Activated B cell treated with CpG ODN at 0.5 μM for 24 hours (primary cell): ENCODE measurements at regions of chr7 and their contacts with region 1.

Region 1: GRCh38 chr7:19665399-19666008 is 43.3 kb downstream of the POLR1F start:
- DNase-seq: no peak
- ATAC-seq: peak; percentile 32
- H3K4me3 Mint-ChIP-seq: no peak overlapping the region
- H3K27ac Mint-ChIP-seq: no peak overlapping the region
- H3K4me1 Mint-ChIP-seq: peaks cover 20% of the 10 kb centered on the region
- H3K27me3 Mint-ChIP-seq: no peaks in the 10 kb centered on the region
- CTCF ChIP-seq: no peak

Region 2: DNA sequence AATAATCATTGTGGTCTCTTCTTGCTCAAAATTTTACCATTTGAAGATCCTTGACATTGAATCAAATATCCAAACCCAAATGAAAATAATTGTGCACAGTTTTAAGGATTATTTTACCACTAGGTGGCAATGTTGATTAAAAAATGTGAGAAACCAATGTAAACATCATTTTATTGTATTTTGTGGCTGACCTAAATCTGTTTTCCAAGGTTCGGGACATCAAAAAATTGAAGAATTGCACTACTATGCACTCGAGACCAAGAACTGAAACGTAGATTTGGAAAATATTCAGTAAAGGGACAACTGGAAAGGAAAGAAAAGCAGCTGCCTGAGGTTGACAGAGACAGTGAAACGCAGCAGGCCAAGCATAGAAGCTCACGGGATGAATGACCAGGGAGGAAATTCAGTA is 1984.6 kb before region 1 on chr7:
- CTCF ChIA-PET with region 1: interaction called, 4 read pairs
- POLR2A ChIA-PET with region 1: no interaction called
- intact Hi-C with region 1: loop called (anchors 1 kb)
- DNase-seq: no peak
- ATAC-seq: no peak
- H3K4me3 Mint-ChIP-seq: no peak overlapping the region
- H3K27ac Mint-ChIP-seq: no peak overlapping the region
- H3K4me1 Mint-ChIP-seq: no peaks in the 10 kb centered on the region
- H3K27me3 Mint-ChIP-seq: no peaks in the 10 kb centered on the region
- CTCF ChIP-seq: no peak

Region 3: DNA sequence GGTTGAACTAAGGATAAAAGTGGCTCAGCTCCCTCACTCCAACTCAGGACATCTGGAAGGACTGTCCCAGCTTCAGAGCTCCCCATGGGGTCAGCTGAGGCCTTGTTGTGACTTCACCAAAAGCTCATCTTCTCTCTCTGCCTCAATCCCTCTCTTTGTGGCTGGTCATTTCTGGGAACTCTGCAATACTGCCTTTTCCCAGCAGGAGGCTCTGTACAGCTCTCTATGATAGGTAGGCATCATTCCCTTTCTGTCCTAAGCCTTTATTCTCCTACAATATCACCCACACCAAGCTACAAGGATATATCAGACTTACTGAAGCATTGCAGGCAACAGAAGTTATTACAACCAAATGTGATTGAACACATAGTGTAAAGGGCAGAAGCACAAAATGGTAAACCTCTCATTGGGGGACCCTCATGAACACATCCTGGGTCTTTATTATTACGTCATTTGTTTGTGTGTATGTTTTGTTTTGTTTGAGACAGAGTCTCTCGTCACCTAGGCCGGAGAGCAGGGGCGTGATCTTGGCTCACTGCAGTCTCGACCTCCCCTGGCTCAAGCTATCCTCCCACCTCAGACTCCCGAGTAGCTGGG is 1601.2 kb before region 1 on chr7:
- CTCF ChIA-PET with region 1: no interaction called
- POLR2A ChIA-PET with region 1: no interaction called
- intact Hi-C with region 1: loop called (anchors 1 kb)
- DNase-seq: no peak
- ATAC-seq: no peak
- H3K4me3 Mint-ChIP-seq: no peak overlapping the region
- H3K27ac Mint-ChIP-seq: no peak overlapping the region
- H3K4me1 Mint-ChIP-seq: no peaks in the 10 kb centered on the region
- H3K27me3 Mint-ChIP-seq: no peaks in the 10 kb centered on the region
- CTCF ChIP-seq: no peak

Region 4: DNA sequence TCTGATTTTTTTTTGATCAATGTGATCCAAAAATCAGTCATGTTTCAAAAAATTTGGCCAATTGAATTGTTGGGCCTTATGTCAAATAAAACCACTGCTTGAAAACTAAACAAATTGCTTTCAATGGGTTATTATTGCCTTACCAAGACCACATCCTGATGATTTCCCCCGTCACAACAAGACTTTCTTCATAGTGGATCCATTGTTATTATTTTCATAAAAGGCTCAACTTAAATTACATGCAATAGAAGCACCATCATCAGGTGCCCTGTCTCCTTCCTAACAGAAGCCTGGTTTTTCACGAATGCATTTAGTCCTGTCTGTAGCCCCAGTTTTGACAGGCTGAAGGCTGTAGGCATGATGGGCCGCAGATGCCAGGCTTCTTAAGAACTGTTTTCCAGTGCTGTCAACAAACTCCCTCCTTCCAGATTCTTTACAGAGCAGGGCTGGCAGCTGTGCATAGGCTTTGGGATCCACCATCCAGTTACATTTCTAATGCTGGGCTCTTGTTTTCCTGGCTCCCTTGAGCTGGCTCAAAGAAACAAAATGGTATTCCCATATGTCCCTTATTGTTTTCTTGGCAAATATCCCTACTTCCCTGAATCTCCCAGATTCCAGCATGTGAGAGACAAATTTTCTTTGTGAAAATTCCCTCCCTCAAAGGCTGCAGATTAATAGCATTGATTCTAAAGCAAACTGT is 850.1 kb before region 1 on chr7:
- CTCF ChIA-PET with region 1: no interaction called
- POLR2A ChIA-PET with region 1: no interaction called
- intact Hi-C with region 1: no loop called
- DNase-seq: no peak
- ATAC-seq: no peak
- H3K4me3 Mint-ChIP-seq: no peak overlapping the region
- H3K27ac Mint-ChIP-seq: no peak overlapping the region
- H3K4me1 Mint-ChIP-seq: no peaks in the 10 kb centered on the region
- H3K27me3 Mint-ChIP-seq: no peaks in the 10 kb centered on the region
- CTCF ChIP-seq: no peak

Region 5: DNA sequence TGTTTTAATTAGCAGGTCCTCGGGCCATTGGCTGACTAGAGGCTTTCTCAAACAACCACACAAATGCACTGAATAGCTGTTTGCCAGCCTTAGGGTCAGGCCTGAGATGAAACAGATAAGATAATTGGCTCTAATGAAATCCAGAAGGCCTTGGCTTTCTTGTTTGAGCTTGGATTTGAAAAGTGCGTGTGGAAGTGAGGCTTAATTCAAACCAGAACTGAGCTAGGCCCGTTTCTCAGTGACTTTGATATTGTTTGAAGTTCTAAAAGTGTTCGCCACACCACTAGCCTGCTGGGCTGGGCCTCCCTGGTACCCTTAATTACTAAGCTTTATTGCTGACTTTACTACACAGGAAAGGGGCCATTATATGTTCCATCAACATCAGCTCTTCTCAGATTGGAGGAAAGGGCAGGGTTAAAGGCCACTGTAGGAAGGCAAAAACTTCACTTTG is 818.7 kb before region 1 on chr7:
- CTCF ChIA-PET with region 1: no interaction called
- POLR2A ChIA-PET with region 1: no interaction called
- intact Hi-C with region 1: no loop called
- DNase-seq: no peak
- ATAC-seq: no peak
- H3K4me3 Mint-ChIP-seq: no peak overlapping the region
- H3K27ac Mint-ChIP-seq: no peak overlapping the region
- H3K4me1 Mint-ChIP-seq: peaks cover 4% of the 10 kb centered on the region
- H3K27me3 Mint-ChIP-seq: no peaks in the 10 kb centered on the region
- CTCF ChIP-seq: no peak

Region 6: GRCh38 chr7:19117091-19117869 is 548.2 kb before region 1 on chr7 and contains the start of gene TWIST1:
- CTCF ChIA-PET with region 1: no interaction called
- POLR2A ChIA-PET with region 1: no interaction called
- intact Hi-C with region 1: loop called (anchors 10 kb)
- DNase-seq: no peak
- ATAC-seq: peak; percentile 18
- H3K4me3 Mint-ChIP-seq: peak within 1 kb of the TSS; percentile 66
- H3K27ac Mint-ChIP-seq: no peak within 1 kb of the TSS
- H3K4me1 Mint-ChIP-seq: peaks cover 15% of the 10 kb centered on the region
- H3K27me3 Mint-ChIP-seq: peaks cover 50% of the 10 kb centered on the region
- CTCF ChIP-seq: no peak
- total RNA-seq, gene TWIST1: not detected in 2 replicates

Region 7: DNA sequence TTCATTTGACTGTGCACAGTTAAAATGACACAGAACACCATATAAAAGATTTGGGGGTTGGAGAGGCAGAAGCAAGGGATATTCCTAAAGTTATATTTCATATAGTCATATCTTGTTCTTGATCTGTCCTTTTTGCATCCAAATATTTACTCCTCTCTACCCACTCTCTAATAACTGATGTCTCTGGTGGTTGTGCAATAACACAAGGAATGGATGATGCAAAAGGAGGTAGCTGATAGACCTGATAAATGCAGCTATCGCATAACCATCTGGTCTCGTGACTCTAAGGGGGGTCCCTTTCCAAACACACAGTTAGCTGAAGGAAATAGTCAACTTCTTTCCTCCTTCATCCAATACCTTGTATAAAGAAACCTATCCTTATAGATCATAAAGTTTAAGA is 79.7 kb before region 1 on chr7:
- CTCF ChIA-PET with region 1: no interaction called
- POLR2A ChIA-PET with region 1: no interaction called
- intact Hi-C with region 1: no loop called
- DNase-seq: no peak
- ATAC-seq: no peak
- H3K4me3 Mint-ChIP-seq: no peak overlapping the region
- H3K27ac Mint-ChIP-seq: no peak overlapping the region
- H3K4me1 Mint-ChIP-seq: no peaks in the 10 kb centered on the region
- H3K27me3 Mint-ChIP-seq: no peaks in the 10 kb centered on the region
- CTCF ChIP-seq: no peak

Region 8: GRCh38 chr7:20330240-20330927 is 664.9 kb after region 1 on chr7 and contains the start of gene ITGB8:
- CTCF ChIA-PET with region 1: no interaction called
- POLR2A ChIA-PET with region 1: no interaction called
- intact Hi-C with region 1: loop called (anchors 2 kb)
- DNase-seq: no peak
- ATAC-seq: peak; percentile 69
- H3K4me3 Mint-ChIP-seq: peak within 1 kb of the TSS; percentile 95
- H3K27ac Mint-ChIP-seq: peak within 1 kb of the TSS; percentile 84
- H3K4me1 Mint-ChIP-seq: peaks cover 37% of the 10 kb centered on the region
- H3K27me3 Mint-ChIP-seq: peaks cover 2% of the 10 kb centered on the region
- CTCF ChIP-seq: no peak
- total RNA-seq, gene ITGB8: 0.75 and 1.3 TPM in 2 replicates